ENCODE measurements at regions of chr1 and their contacts with region 1.

Region 1: GRCh38 chr1:99374109-99374508 is 109.8 kb downstream of the PLPPR4 start:
- DNase-seq: no peak
- ATAC-seq: no peak
- H3K4me3 ChIP-seq: no peak overlapping the region
- H3K4me3 Mint-ChIP-seq: no peak overlapping the region
- H3K27ac ChIP-seq: no peak overlapping the region
- H3K27ac Mint-ChIP-seq: no peak overlapping the region
- H3K4me1 ChIP-seq: peaks cover 4% of the 10 kb centered on the region
- H3K4me1 Mint-ChIP-seq: peaks cover 4% of the 10 kb centered on the region
- H3K27me3 ChIP-seq: no peaks in the 10 kb centered on the region
- H3K27me3 Mint-ChIP-seq: no peaks in the 10 kb centered on the region
- CTCF ChIP-seq: no peak

Region 2: GRCh38 chr1:99315305-99315704 is 58.8 kb before region 1 on chr1:
- CTCF ChIA-PET with region 1: no interaction called
- POLR2A ChIA-PET with region 1: no interaction called
- intact Hi-C with region 1: loop called in 1 of 2 experiments (anchors 2 kb)
- DNase-seq: no peak
- ATAC-seq: no peak
- H3K4me3 ChIP-seq: no peak overlapping the region
- H3K4me3 Mint-ChIP-seq: no peak overlapping the region
- H3K27ac ChIP-seq: no peak overlapping the region
- H3K27ac Mint-ChIP-seq: no peak overlapping the region
- H3K4me1 ChIP-seq: no peaks in the 10 kb centered on the region
- H3K4me1 Mint-ChIP-seq: no peaks in the 10 kb centered on the region
- H3K27me3 ChIP-seq: peaks cover 0 to 2% of the 10 kb centered on the region in 2 experiments
- H3K27me3 Mint-ChIP-seq: no peaks in the 10 kb centered on the region
- CTCF ChIP-seq: no peak

Region 3: DNA sequence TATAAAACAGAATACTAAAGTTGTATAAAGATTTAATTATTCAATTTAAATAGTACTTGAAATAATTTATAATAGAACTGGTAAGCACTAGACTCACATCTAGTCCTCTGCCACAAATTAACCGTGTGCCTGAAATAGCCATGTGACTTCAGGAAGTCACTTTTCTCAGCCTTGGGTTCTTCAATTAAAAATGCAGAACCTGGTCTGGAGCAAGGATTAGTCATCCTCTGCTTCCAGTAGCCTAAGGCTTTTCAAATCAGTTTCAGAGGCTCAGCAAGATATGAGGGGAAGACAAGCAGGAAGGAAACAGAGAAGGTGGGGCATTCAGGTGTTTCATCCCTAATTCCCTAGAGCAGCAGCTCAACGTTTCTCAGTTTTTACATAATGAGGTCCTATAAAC is 1628.4 kb after region 1 on chr1:
- CTCF ChIA-PET with region 1: no interaction called
- POLR2A ChIA-PET with region 1: no interaction called
- intact Hi-C with region 1: no loop called
- DNase-seq: peak in 1 of 9 experiments; percentile 20
- ATAC-seq: no peak
- H3K4me3 ChIP-seq: no peak overlapping the region
- H3K4me3 Mint-ChIP-seq: no peak overlapping the region
- H3K27ac ChIP-seq: no peak overlapping the region
- H3K27ac Mint-ChIP-seq: peak overlapping the region; percentile 69
- H3K4me1 ChIP-seq: peaks cover 41% of the 10 kb centered on the region
- H3K4me1 Mint-ChIP-seq: peaks cover 57% of the 10 kb centered on the region
- H3K27me3 ChIP-seq: no peaks in the 10 kb centered on the region
- H3K27me3 Mint-ChIP-seq: no peaks in the 10 kb centered on the region
- CTCF ChIP-seq: no peak